ENCODE measurements at regions of chr6 and their contacts with region 1.

Region 1: DNA sequence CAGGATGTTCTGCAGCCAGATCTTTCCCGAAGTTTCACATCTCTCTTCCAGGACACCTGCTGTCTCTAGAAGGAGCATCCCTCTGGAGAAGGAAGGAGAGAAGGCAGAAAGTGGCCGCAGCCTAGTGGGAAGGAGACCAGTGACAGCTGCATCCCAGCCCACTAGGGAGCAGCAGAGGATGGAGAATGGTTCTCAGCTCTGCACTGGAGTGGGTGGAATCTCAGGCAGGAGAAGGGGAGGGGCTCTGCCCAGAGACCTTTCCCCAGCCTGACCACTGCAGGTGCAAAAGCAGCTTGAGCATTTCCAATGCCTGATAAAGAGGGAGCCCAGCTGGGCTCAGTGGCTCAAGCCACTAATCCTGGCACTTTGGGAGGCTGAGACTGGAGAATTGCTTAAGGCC is 32.3 kb downstream of the NCR2 start:
- DNase-seq: peak; percentile 62
- H3K4me3 ChIP-seq: no peak overlapping the region
- H3K27ac ChIP-seq: no peak overlapping the region
- H3K4me1 ChIP-seq: peaks cover 3% of the 10 kb centered on the region
- H3K27me3 ChIP-seq: peaks cover 27 to 46% of the 10 kb centered on the region in 2 experiments
- CTCF ChIP-seq: peak; percentile 50 to 81
- POLR2A ChIP-seq: no peak

Region 2: DNA sequence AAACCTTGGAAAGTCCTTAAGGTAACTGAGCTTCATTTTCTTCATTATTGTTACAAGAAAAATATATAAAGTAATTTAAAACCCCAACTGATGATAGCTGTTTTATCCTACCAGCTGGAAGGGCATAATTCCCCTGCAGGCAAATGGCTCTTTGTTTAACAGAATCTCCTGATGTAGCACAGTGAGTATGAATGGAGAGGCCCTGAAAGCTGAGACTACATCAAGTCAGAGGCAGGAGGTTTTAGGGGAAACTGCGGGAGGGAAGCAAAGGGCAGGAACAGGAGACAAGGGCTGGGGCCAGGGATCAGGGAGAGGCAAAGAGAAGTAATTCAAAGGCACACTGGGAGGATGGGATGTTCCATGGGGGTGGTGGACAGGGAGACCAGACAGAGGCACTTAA is 661.5 kb before region 1 on chr6:
- CTCF ChIA-PET with region 1: no interaction called
- POLR2A ChIA-PET with region 1: no interaction called
- dilution Hi-C with region 1: no loop called
- intact Hi-C with region 1: no loop called
- DNase-seq: no peak
- H3K4me3 ChIP-seq: no peak overlapping the region
- H3K27ac ChIP-seq: no peak overlapping the region
- H3K4me1 ChIP-seq: no peaks in the 10 kb centered on the region
- H3K27me3 ChIP-seq: no peaks in the 10 kb centered on the region
- CTCF ChIP-seq: no peak
- POLR2A ChIP-seq: no peak

Region 3: DNA sequence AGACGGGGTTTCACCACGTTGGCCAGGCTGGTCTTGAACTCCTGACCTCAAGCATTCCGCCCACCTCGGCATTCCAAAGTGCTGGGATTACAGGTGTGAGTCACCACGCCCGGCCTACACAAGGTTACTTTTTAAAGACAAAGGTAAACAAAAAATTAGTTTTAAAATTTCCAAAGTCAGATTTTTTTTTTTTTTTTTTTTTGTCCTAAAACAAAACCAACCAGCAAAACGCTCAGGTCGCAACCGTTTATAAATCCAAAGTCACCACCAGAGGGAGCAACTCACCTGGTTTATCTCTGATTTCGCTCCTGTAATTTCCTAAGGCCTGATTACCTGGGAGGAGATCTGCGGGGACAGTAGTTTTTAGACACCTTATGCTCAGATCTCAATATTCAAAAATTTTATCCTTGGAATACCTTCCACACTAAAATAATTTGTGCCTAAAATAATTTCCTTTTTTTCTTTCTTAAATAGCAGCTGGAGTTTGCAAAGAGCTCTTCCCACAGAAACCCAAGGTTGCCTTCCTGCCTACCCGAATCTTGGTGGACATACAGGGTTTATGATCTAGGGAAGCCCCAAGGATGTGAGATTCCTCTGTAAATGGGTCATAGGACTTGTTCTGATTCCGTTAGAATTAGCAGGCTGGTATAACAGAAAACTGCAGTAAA is 61.4 kb before region 1 on chr6:
- CTCF ChIA-PET with region 1: interaction called, 13 read pairs
- POLR2A ChIA-PET with region 1: no interaction called
- dilution Hi-C with region 1: no loop called
- intact Hi-C with region 1: loop called (anchors 5 kb)
- DNase-seq: peak; percentile 49
- H3K4me3 ChIP-seq: no peak overlapping the region
- H3K27ac ChIP-seq: no peak overlapping the region
- H3K4me1 ChIP-seq: no peaks in the 10 kb centered on the region
- H3K27me3 ChIP-seq: peaks cover 25 to 33% of the 10 kb centered on the region in 2 experiments
- CTCF ChIP-seq: peak; percentile 45 to 47
- POLR2A ChIP-seq: no peak

Region 4: DNA sequence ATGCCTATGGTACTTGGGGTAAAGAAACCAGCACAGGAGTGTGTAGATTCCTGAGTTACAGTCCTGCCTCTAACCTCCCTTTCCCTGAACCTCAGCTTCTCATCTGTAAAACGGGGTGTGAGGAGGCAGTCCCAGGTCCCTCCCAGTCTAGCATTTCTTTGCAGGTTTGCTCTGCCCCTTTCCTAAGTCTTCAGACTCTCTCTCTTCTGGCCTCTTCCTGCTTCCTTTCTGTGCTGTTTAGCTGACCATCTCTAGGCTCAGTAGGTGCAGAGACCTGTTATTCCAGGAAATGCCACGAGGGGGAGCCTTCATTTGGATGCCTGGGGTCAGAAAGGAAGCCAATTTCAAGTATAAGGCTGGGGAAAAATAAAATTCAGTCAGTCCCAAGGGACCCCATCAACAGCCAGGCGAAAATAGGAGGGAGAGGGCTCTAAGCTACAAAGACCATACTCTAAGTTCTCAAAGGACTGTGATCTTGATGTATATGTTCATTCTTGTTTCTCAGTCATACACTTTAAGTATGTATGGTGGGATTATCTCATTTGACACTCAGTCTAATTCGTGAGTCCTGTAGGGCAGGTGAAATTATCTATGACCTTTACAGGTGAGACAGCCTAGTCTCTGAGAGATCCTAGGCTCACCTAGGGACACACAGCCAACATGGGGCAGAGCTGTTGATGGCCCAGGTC is 56.8 kb after region 1 on chr6:
- CTCF ChIA-PET with region 1: interaction called, 7 read pairs
- POLR2A ChIA-PET with region 1: no interaction called
- dilution Hi-C with region 1: no loop called
- intact Hi-C with region 1: loop called (anchors 5 kb)
- DNase-seq: peak; percentile 77
- H3K4me3 ChIP-seq: no peak overlapping the region
- H3K27ac ChIP-seq: no peak overlapping the region
- H3K4me1 ChIP-seq: no peaks in the 10 kb centered on the region
- H3K27me3 ChIP-seq: peaks cover 37 to 46% of the 10 kb centered on the region in 2 experiments
- CTCF ChIP-seq: peak; percentile 70 to 78
- POLR2A ChIP-seq: no peak

Region 5: GRCh38 chr6:41591859-41592502 is 224.3 kb after region 1 on chr6:
- CTCF ChIA-PET with region 1: interaction called, 9 read pairs
- POLR2A ChIA-PET with region 1: no interaction called
- dilution Hi-C with region 1: no loop called
- intact Hi-C with region 1: loop called (anchors 1 kb)
- DNase-seq: peak; percentile 73
- H3K4me3 ChIP-seq: no peak overlapping the region
- H3K27ac ChIP-seq: no peak overlapping the region
- H3K4me1 ChIP-seq: no peaks in the 10 kb centered on the region
- H3K27me3 ChIP-seq: no peaks in the 10 kb centered on the region
- CTCF ChIP-seq: peak; percentile 89 to 93
- POLR2A ChIP-seq: no peak

Region 6: DNA sequence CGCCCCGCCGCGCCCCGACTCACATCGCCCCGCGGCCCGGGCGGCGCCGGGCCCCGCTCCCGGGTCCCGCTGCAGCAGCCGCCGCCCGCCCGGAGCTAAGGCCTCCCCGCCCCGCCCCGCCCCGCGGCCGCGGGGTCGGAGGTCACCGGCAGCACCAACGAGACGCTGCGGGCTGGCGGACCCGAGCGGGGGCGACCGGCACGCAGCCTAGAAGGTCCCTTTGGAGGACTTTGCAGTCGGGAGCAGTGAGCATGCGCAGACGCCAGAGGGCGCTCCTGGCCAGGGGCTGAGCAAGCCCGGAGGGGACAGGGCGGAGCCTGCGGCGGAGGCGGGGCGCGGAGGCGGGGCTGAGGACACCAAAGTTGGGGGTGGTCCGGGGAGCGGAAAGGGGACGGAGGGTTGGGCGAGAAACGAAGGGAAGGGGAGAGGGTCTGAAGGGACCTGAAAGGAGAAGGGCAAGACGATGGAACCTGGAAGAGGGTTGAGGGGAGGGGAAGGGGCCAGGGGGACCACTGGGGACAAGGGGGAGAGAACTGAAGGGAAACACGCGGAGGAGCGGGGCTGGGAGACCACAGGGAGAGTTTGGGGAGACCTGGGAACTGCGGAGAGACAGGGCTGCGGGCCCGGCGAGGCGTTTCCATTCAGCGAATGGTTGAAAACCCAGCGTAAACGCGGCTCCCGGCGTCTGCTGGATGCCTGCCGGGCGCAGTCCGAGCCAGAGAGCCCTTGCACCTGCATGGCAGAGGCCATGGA is 412.3 kb after region 1 on chr6 and contains the start of gene FRS3:
- CTCF ChIA-PET with region 1: interaction called, 21 read pairs
- POLR2A ChIA-PET with region 1: no interaction called
- dilution Hi-C with region 1: no loop called
- intact Hi-C with region 1: loop called (anchors 1 kb)
- DNase-seq: peak; percentile 95
- H3K4me3 ChIP-seq: peak within 1 kb of the TSS; percentile 73 to 86 (median 78)
- H3K27ac ChIP-seq: no peak within 1 kb of the TSS
- H3K4me1 ChIP-seq: peaks cover 18% of the 10 kb centered on the region
- H3K27me3 ChIP-seq: no peaks in the 10 kb centered on the region
- CTCF ChIP-seq: peak; percentile 93 to 98
- POLR2A ChIP-seq: no peak
- total RNA-seq, gene FRS3: 4.4 and 5.3 TPM in 2 replicates

Measured in endothelial cell of umbilical vein (primary cell).